ENCODE measurements at regions of chr2 and their contacts with region 1.

Region 1: GRCh38 chr2:202178342-202178958 is 59.9 kb downstream of the SUMO1 start:
- DNase-seq: peak; percentile 68
- H3K4me3 ChIP-seq: no peak overlapping the region; a peak in 1 of 4 replicates
- H3K27ac ChIP-seq: no peak overlapping the region
- H3K4me1 ChIP-seq: no peaks in the 10 kb centered on the region
- H3K27me3 ChIP-seq: no peaks in the 10 kb centered on the region
- CTCF ChIP-seq: peak; percentile 89
- EP300 ChIP-seq: no peak
- RAD21 ChIP-seq: peak; percentile 98

Region 2: DNA sequence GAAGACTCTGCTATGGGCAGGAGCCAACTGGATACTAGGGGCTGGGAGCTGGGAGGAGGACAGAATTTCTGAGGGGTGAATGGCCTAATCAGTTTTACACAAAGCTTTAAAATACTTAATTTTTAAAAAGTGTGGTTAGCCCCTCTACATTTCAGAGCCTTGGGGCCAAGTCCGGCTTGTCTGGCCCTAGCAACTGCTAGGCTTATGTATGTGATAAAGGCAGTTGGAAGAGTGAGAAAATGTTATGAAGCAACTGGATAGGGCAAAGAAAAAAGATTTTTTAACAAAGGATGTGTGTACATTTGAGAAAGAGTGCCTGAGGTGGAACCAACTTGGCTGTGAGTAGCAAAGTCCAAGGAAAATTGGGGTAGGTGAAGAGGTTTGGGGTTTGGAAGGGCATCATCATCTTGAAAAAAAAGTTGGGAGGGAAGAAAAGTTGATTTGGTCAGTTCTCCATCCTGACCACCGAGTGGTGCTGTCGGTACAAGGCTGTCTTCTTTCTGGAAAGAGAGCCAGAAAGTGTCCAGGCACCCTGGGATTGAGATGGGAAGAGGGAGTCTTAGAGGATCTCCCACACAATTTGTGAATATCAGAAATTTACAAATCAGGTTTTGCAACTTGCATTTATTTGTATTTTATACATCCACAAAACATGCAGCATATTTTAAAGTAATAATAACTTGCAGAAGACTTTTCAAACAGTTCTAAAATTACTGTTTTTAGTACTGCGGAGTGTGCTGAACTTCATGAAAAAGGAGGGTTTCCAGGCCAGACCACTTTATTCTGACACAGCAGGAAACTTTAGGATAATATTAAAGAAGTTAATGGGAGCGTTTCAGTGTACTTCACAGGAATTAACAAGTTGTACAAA is 382.6 kb before region 1 on chr2:
- CTCF ChIA-PET with region 1: interaction called, 14 read pairs
- POLR2A ChIA-PET with region 1: no interaction called
- DNase-seq: peak; percentile 77
- H3K4me3 ChIP-seq: no peak overlapping the region; a peak in 1 of 4 replicates
- H3K27ac ChIP-seq: peak overlapping the region; percentile 3 to 99; a peak in 3 of 4 replicates
- H3K4me1 ChIP-seq: peaks cover 0 to 22% of the 10 kb centered on the region in 2 experiments; a peak in 2 of 4 replicates
- H3K27me3 ChIP-seq: no peaks in the 10 kb centered on the region
- CTCF ChIP-seq: peak; percentile 83
- EP300 ChIP-seq: no peak
- RAD21 ChIP-seq: peak; percentile 95

Region 3: GRCh38 chr2:201854221-201854801 is 324.1 kb before region 1 on chr2:
- CTCF ChIA-PET with region 1: interaction called, 76 read pairs
- POLR2A ChIA-PET with region 1: no interaction called
- DNase-seq: no peak
- H3K4me3 ChIP-seq: no peak overlapping the region
- H3K27ac ChIP-seq: peak overlapping the region; percentile 56 to 96; a peak in 3 of 4 replicates
- H3K4me1 ChIP-seq: peaks cover 0 to 41% of the 10 kb centered on the region in 2 experiments; a peak in 3 of 4 replicates
- H3K27me3 ChIP-seq: no peaks in the 10 kb centered on the region
- CTCF ChIP-seq: no peak
- EP300 ChIP-seq: peak in 1 of 2 experiments; percentile 94; a peak in 2 of 4 replicates
- RAD21 ChIP-seq: no peak

Region 4: GRCh38 chr2:202158796-202159195 is 19.7 kb before region 1 on chr2:
- CTCF ChIA-PET with region 1: interaction called, 15 read pairs
- POLR2A ChIA-PET with region 1: no interaction called
- DNase-seq: no peak
- H3K4me3 ChIP-seq: no peak overlapping the region
- H3K27ac ChIP-seq: no peak overlapping the region
- H3K4me1 ChIP-seq: peaks cover 6 to 7% of the 10 kb centered on the region in 2 experiments; a peak in 2 of 4 replicates
- H3K27me3 ChIP-seq: no peaks in the 10 kb centered on the region
- CTCF ChIP-seq: peak; percentile 49
- EP300 ChIP-seq: no peak
- RAD21 ChIP-seq: peak; percentile 89

Region 5: GRCh38 chr2:202164411-202164810 is 14.0 kb before region 1 on chr2:
- CTCF ChIA-PET with region 1: interaction called, 15 read pairs
- POLR2A ChIA-PET with region 1: no interaction called
- DNase-seq: no peak
- H3K4me3 ChIP-seq: no peak overlapping the region
- H3K27ac ChIP-seq: no peak overlapping the region
- H3K4me1 ChIP-seq: peaks cover 6 to 11% of the 10 kb centered on the region in 2 experiments; a peak in 2 of 4 replicates
- H3K27me3 ChIP-seq: no peaks in the 10 kb centered on the region
- CTCF ChIP-seq: no peak
- EP300 ChIP-seq: no peak
- RAD21 ChIP-seq: no peak

Region 6: DNA sequence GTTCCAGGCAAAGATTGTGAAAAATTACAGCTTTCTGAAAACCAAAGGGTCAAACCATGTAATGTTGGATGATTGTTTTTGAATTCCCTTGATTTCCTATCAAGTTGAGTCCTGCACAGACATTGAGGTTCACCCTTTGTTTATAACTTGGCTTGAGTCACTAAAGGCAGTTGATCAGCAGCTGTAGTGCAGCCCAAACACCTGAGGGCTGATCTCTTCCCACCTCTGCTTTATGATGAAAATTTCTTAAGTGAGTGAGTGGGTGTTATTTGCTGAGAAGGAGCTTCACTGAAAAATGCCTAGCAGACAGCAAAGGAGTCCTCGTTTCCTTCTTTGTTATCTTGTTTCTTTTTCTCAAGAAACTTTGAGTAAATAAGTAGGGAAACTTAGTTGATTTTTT is 165.7 kb after region 1 on chr2:
- CTCF ChIA-PET with region 1: no interaction called
- POLR2A ChIA-PET with region 1: no interaction called
- DNase-seq: no peak
- H3K4me3 ChIP-seq: no peak overlapping the region
- H3K27ac ChIP-seq: no peak overlapping the region
- H3K4me1 ChIP-seq: no peaks in the 10 kb centered on the region
- H3K27me3 ChIP-seq: no peaks in the 10 kb centered on the region
- CTCF ChIP-seq: no peak
- EP300 ChIP-seq: no peak
- RAD21 ChIP-seq: no peak

Measured in SK-N-SH (cell line).